CD4-positive, alpha-beta memory T cell (primary cell): ENCODE measurements at regions of chr10 and their contacts with region 1.

Region 1: DNA sequence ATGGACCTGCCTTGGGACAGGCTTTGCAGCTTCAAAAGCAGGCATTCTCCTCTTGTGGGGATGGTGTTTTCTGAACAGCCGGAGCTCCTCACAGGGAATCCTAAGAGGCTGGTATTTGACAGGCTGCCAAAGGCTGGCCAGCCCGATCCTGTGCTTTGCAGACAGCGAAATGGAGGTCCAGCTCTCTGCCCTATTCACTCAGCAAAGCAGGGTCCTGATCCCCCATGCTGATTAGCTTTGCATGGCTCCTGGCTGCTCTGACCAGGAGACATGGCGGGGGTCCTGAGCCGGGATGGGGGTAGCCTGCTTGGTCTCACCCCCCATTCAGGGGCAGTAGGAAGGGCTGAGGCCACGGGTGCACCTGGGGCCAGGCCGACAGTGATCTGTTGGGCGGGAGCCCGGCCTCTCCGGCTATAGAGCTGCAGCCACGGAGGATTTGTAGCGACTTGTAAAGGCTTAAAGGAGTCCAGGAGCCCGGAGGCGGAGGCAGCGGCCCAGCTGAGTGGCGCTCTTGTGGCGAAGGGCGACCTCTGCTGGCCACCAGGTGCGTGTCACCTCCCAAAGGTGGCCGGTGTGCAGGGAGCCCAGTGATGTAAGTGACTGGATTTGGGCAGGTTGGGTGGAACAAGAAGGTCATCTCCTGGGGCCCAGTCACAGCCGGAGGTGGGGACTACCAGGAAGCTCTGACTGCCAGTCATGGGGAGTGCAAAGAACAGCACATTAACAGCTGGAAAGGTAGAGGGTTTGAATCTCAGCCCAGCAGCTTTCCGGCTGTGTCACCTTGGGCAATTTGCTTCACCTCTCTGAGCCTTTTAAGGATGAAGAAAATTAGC is 126.5 kb downstream of the ZMIZ1 start:
- DNase-seq: peak; percentile 66 to 72 (median 71)
- H3K4me3 ChIP-seq: no peak overlapping the region
- H3K4me3 Mint-ChIP-seq: peak overlapping the region in 2 of 8 donors; percentile 21 to 32
- H3K27ac ChIP-seq: no peak overlapping the region
- H3K27ac Mint-ChIP-seq: peak overlapping the region in 4 of 7 donors; percentile 18 to 44 (median 34)
- H3K4me1 ChIP-seq: peaks cover 3% of the 10 kb centered on the region
- H3K4me1 Mint-ChIP-seq: peaks cover 0 to 6% (median 2%) of the 10 kb centered on the region in 4 donors
- H3K27me3 ChIP-seq: no peaks in the 10 kb centered on the region
- H3K27me3 Mint-ChIP-seq: no peaks in the 10 kb centered on the region

Region 2: DNA sequence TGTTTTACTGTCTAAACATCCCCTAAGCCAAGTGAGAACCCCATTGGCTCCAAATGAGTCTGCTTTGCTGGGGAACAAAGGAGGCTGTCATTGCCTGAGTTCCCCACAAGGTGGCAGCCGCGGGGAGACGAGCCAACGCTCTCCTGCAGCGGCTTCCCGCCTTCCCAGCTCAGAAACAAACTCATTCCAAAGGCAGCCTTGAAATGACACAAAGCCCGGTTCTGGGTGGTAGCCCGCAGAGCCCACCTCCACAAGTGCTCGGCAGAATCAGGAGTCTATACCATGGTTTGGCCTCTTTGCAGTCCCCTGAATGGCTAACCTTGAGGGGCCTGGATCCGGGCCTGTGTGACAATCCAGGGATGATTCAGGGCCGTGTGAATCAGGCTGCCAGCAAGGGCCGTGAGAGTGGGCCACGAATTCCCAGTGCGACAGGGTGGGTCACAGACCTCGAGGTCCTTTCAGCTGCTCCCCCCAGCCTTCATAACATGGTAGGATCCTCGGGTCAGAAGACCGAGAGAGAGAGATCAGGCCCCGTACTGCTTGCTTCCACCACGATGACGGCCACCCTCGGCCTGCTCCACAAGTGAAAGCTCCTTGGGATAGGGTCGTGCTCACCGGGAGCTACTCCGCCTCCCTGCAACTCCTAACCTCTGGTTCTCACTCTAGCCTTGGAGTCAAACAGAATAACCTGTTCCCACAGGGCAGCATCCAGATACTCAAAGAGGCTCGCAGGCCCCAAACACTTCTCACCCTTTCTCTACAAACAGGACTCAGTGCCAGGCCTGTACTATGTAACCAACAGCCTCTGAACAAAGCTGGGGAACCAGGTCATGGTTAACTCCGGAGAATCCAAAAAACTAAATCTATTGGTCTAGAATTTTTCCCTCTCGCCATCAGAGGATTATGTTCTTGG is 1348.3 kb before region 1 on chr10:
- CTCF ChIA-PET with region 1: no interaction called
- POLR2A ChIA-PET with region 1: no interaction called
- intact Hi-C with region 1: loop called (anchors 5 kb)
- DNase-seq: peak in 4 of 5 donors; percentile 49 to 56 (median 50)
- H3K4me3 ChIP-seq: no peak overlapping the region
- H3K4me3 Mint-ChIP-seq: no peak overlapping the region
- H3K27ac ChIP-seq: no peak overlapping the region
- H3K27ac Mint-ChIP-seq: peak overlapping the region in 4 of 7 donors; percentile 23 to 53 (median 45)
- H3K4me1 ChIP-seq: no peaks in the 10 kb centered on the region
- H3K4me1 Mint-ChIP-seq: peaks cover 0 to 4% (median 0%) of the 10 kb centered on the region in 4 donors
- H3K27me3 ChIP-seq: no peaks in the 10 kb centered on the region
- H3K27me3 Mint-ChIP-seq: no peaks in the 10 kb centered on the region

Region 3: DNA sequence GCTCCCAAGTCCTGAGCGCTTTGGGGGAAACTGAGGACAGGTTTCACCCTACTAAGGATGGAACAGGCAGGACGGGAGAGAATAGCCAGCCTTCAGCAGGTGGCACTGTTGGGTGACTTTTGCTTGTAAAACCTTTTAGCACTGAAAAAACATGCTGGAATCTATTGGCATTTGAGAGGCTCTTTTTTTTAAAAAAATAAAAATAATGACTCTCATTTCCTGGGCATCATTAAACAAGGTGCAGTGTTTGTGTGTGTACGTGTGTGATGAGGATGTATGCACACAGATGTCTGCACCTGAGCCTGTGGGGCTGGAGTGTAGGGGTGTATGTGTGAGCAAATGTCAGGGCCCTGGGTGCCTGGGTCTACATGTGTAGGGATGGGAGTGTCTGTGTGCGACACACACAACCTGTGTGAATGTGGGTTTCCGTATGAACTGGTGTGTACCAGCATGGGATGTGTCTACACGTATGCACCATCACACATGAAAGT is 983.7 kb before region 1 on chr10:
- CTCF ChIA-PET with region 1: no interaction called
- POLR2A ChIA-PET with region 1: no interaction called
- intact Hi-C with region 1: loop called (anchors 1 kb)
- DNase-seq: no peak
- H3K4me3 ChIP-seq: no peak overlapping the region
- H3K4me3 Mint-ChIP-seq: no peak overlapping the region
- H3K27ac ChIP-seq: no peak overlapping the region
- H3K27ac Mint-ChIP-seq: peak overlapping the region in 2 of 7 donors; percentile 14 to 44
- H3K4me1 ChIP-seq: no peaks in the 10 kb centered on the region
- H3K4me1 Mint-ChIP-seq: no peaks in the 10 kb centered on the region
- H3K27me3 ChIP-seq: no peaks in the 10 kb centered on the region
- H3K27me3 Mint-ChIP-seq: peaks cover 1 to 12% of the 10 kb centered on the region in 2 donors

Region 4: GRCh38 chr10:78599081-78599853 is 596.0 kb before region 1 on chr10:
- CTCF ChIA-PET with region 1: interaction called, 5 read pairs
- POLR2A ChIA-PET with region 1: no interaction called
- intact Hi-C with region 1: loop called (anchors 2 kb)
- DNase-seq: no peak
- H3K4me3 ChIP-seq: no peak overlapping the region
- H3K4me3 Mint-ChIP-seq: no peak overlapping the region
- H3K27ac ChIP-seq: no peak overlapping the region
- H3K27ac Mint-ChIP-seq: no peak overlapping the region
- H3K4me1 ChIP-seq: no peaks in the 10 kb centered on the region
- H3K4me1 Mint-ChIP-seq: no peaks in the 10 kb centered on the region
- H3K27me3 ChIP-seq: no peaks in the 10 kb centered on the region
- H3K27me3 Mint-ChIP-seq: peaks cover 4 to 5% of the 10 kb centered on the region in 2 donors

Region 5: DNA sequence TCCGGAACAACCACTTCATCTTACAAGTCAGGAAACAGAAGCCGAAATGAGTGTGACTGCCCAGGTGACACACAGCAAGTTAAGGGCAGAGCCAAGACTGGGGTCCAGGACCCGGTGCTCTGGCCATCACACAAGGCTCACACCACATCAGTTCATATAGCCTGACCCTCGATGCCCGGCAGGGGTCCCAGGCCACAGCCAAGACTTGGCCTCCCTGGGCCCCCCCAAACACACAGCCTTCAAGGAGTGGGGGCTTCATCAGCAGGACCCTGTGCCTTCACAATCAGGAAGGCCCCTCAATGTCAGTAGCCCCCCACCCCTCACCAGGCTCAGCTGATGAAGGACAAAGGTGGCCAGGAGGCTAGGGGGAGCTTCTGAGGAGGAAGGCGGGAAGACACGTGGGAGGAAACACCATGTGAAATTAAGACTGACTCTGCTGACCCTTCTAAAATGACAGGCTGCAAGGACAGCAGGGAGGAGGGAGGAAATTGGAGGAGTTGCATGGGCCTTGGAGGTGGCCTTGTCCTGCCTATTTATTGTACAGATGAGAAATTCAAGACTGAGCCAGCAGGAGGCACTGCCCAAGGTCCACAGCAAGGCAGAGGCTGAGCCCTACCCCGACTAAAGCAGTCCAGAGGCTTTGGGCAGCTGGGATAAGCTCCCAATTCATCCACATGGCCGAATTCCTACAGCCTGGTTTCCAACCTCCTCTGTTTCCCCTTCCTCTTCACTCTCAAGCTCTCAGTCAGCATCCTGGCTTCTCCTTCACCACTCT is 342.7 kb before region 1 on chr10:
- CTCF ChIA-PET with region 1: interaction called, 50 read pairs
- POLR2A ChIA-PET with region 1: no interaction called
- intact Hi-C with region 1: loop called (anchors 1 kb)
- DNase-seq: peak in 4 of 5 donors; percentile 10 to 22 (median 16)
- H3K4me3 ChIP-seq: no peak overlapping the region
- H3K4me3 Mint-ChIP-seq: no peak overlapping the region
- H3K27ac ChIP-seq: no peak overlapping the region
- H3K27ac Mint-ChIP-seq: no peak overlapping the region
- H3K4me1 ChIP-seq: no peaks in the 10 kb centered on the region
- H3K4me1 Mint-ChIP-seq: no peaks in the 10 kb centered on the region
- H3K27me3 ChIP-seq: no peaks in the 10 kb centered on the region
- H3K27me3 Mint-ChIP-seq: no peaks in the 10 kb centered on the region

Region 6: DNA sequence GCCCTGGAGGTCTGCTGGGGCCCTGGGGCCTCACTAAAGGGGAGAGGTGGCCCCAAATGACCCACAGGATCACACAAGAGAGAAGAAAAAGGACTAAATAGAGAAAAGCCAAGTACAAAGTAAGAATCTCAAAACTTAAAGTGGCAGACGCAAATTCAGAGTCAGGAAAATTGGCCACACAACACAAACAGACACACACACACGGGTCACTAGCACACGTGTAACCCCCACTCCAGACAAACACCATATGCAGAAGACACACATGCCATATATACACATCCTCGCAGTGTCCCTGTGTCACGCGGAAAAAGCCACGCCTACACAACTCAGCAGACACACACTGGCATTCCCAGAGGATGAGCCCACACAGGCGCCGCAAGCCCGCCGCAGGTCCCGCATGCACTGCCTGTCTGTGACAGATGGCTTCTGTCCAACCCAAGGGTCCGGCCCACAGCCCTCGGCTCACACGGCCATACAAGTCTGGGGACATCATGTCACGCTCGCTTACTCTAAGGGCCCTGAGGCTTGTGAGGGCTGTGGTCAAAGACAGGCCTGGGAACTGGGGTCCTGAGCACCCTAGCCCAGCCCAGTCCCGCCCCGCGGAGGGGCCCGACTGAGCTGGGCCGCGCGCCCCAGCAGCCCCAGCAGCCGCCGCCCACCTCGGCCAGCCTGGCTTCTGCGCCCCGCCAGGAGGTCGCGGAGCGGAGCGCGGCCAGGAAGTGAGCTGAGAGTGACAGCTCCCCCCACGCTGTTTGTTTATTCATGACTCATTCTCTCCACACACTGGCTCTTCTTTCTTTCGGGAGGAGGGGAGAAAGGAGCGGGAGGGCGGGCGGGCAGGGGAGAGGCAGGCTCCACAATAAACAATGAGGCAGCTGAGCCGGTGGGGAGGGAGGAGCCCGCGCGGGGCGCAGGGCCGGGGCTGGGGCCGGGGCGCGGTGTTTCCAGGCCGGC is 222.1 kb before region 1 on chr10:
- CTCF ChIA-PET with region 1: interaction called, 3 read pairs
- POLR2A ChIA-PET with region 1: no interaction called
- intact Hi-C with region 1: loop called (anchors 2 kb)
- DNase-seq: peak; percentile 53 to 82 (median 64)
- H3K4me3 ChIP-seq: peak overlapping the region in 1 of 2 donors; percentile 57
- H3K4me3 Mint-ChIP-seq: peak overlapping the region; percentile 78 to 90 (median 84)
- H3K27ac ChIP-seq: no peak overlapping the region
- H3K27ac Mint-ChIP-seq: peak overlapping the region in 6 of 7 donors; percentile 78 to 93 (median 80)
- H3K4me1 ChIP-seq: peaks cover 13% of the 10 kb centered on the region
- H3K4me1 Mint-ChIP-seq: peaks cover 9 to 35% (median 17%) of the 10 kb centered on the region in 4 donors
- H3K27me3 ChIP-seq: no peaks in the 10 kb centered on the region
- H3K27me3 Mint-ChIP-seq: no peaks in the 10 kb centered on the region

Region 7: GRCh38 chr10:79310911-79311573 is 115.7 kb after region 1 on chr10:
- CTCF ChIA-PET with region 1: no interaction called
- POLR2A ChIA-PET with region 1: no interaction called
- intact Hi-C with region 1: no loop called
- DNase-seq: no peak
- H3K4me3 ChIP-seq: no peak overlapping the region
- H3K4me3 Mint-ChIP-seq: no peak overlapping the region
- H3K27ac ChIP-seq: no peak overlapping the region
- H3K27ac Mint-ChIP-seq: peak overlapping the region in 3 of 7 donors; percentile 29 to 52 (median 36)
- H3K4me1 ChIP-seq: peaks cover 8% of the 10 kb centered on the region
- H3K4me1 Mint-ChIP-seq: peaks cover 3 to 11% (median 4%) of the 10 kb centered on the region in 4 donors
- H3K27me3 ChIP-seq: no peaks in the 10 kb centered on the region
- H3K27me3 Mint-ChIP-seq: no peaks in the 10 kb centered on the region